HCT116 (cell line): ENCODE measurements at regions of chr4 and their contacts with region 1.

Region 1: DNA sequence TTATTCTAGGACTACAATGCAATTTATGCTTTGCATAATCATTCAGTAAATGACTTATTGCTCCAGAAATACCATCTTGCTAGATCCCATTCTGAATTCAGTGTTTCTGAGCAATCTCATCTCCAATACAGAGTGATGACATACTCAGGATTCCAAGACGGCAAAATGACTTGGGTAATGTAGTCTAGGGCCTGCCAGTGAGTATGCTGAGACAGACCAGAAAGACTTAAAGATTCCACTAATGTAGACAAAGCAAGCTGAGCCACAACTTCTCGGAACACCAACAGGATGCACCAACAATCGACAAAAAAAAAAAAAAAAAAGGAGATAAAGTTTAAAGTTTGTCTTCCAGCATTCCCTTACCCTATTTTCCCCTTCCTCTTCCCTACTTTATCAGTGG is 919 bp upstream of the SEC24B start:
- DNase-seq: no peak
- ATAC-seq: no peak
- H3K4me3 ChIP-seq: peak overlapping the region; percentile 77 to 89
- H3K27ac ChIP-seq: peak overlapping the region; percentile 83
- H3K4me1 ChIP-seq: peaks cover 7 to 22% of the 10 kb centered on the region in 2 experiments; a peak in 3 of 4 replicates
- H3K27me3 ChIP-seq: no peaks in the 10 kb centered on the region
- CTCF ChIP-seq: no peak
- POLR2A ChIP-seq: no peak
- RAD21 ChIP-seq: no peak

Region 2: DNA sequence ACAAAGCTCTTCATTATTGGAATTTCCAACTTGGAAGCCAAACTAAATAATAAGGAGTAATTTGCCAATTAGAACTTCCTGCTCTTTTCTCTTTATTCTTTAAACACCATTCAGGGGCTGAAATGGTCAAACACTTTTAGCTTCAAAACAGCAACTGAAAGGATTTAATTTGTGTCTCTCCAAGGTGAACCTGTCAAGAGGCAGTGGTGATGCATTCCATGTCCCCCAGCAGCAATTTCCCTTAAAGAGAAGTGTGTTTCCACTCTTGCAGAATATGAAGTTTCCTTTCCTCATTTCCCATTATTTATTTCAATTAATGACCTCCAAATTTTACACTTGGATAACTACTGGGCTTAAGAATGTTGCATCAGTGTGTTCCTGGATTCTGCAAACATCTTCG is 286.2 kb before region 1 on chr4:
- CTCF ChIA-PET with region 1: no interaction called
- POLR2A ChIA-PET with region 1: no interaction called
- RAD21 ChIA-PET with region 1: no interaction called
- intact Hi-C with region 1: no loop called
- DNase-seq: no peak
- ATAC-seq: no peak
- H3K4me3 ChIP-seq: no peak overlapping the region
- H3K27ac ChIP-seq: no peak overlapping the region
- H3K4me1 ChIP-seq: no peaks in the 10 kb centered on the region
- H3K27me3 ChIP-seq: peaks cover 41% of the 10 kb centered on the region
- CTCF ChIP-seq: no peak
- POLR2A ChIP-seq: no peak
- RAD21 ChIP-seq: no peak

Region 3: GRCh38 chr4:109803924-109804571 is 371.4 kb after region 1 on chr4:
- CTCF ChIA-PET with region 1: interaction called, 17 read pairs
- POLR2A ChIA-PET with region 1: no interaction called
- RAD21 ChIA-PET with region 1: no interaction called
- intact Hi-C with region 1: loop called (anchors 1 kb)
- DNase-seq: peak; percentile 51
- ATAC-seq: peak; percentile 94
- H3K4me3 ChIP-seq: no peak overlapping the region
- H3K27ac ChIP-seq: no peak overlapping the region
- H3K4me1 ChIP-seq: peaks cover 0 to 5% of the 10 kb centered on the region in 2 experiments; a peak in 1 of 4 replicates
- H3K27me3 ChIP-seq: no peaks in the 10 kb centered on the region
- CTCF ChIP-seq: peak; percentile 56 to 71 (median 62); a peak in 5 of 6 replicates
- POLR2A ChIP-seq: no peak
- RAD21 ChIP-seq: peak; percentile 85

Region 4: GRCh38 chr4:109826719-109827118 is 394.0 kb after region 1 on chr4:
- CTCF ChIA-PET with region 1: interaction called, 4 read pairs
- POLR2A ChIA-PET with region 1: no interaction called
- RAD21 ChIA-PET with region 1: no interaction called
- intact Hi-C with region 1: loop called (anchors 1 kb)
- DNase-seq: no peak
- ATAC-seq: peak; percentile 66
- H3K4me3 ChIP-seq: no peak overlapping the region
- H3K27ac ChIP-seq: no peak overlapping the region
- H3K4me1 ChIP-seq: no peaks in the 10 kb centered on the region
- H3K27me3 ChIP-seq: no peaks in the 10 kb centered on the region
- CTCF ChIP-seq: peak; percentile 41 to 67 (median 45); a peak in 4 of 6 replicates
- POLR2A ChIP-seq: no peak
- RAD21 ChIP-seq: peak; percentile 62

Region 5: DNA sequence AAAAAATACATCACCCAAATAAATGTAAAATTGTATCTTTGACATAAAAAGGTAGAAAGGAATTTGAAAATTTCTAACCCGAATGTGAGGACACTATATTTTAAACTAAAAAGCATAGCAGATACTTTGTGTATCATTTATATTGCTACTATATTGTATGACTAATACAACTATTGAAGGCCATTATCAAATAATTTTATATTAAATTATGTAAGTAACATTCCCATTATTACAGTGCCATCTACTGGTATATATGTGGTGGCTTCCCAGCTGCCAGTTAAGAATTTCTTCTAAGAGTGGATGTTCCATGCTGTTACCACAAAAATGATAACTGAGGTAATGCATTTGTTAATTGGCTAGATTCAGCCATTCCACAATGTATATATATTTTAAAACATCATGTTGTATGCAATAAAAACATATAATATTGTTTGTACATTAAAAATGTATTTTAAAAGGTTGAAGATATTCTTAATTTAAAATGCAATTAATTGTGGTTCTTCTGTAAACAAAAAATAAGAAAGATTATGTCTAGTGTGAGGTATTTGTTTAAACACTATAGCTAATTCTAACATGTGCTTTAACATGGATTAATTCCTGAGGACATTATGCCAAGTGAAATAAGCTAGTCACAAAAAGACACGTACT is 545.3 kb after region 1 on chr4:
- CTCF ChIA-PET with region 1: interaction called, 6 read pairs
- POLR2A ChIA-PET with region 1: interaction called, 3 read pairs
- RAD21 ChIA-PET with region 1: no interaction called
- intact Hi-C with region 1: loop called (anchors 1 kb)
- DNase-seq: peak; percentile 27
- ATAC-seq: peak; percentile 68
- H3K4me3 ChIP-seq: no peak overlapping the region
- H3K27ac ChIP-seq: no peak overlapping the region
- H3K4me1 ChIP-seq: peaks cover 0 to 4% of the 10 kb centered on the region in 2 experiments; a peak in 1 of 4 replicates
- H3K27me3 ChIP-seq: no peaks in the 10 kb centered on the region
- CTCF ChIP-seq: peak; percentile 57 to 75 (median 58)
- POLR2A ChIP-seq: no peak
- RAD21 ChIP-seq: peak; percentile 80

Region 6: DNA sequence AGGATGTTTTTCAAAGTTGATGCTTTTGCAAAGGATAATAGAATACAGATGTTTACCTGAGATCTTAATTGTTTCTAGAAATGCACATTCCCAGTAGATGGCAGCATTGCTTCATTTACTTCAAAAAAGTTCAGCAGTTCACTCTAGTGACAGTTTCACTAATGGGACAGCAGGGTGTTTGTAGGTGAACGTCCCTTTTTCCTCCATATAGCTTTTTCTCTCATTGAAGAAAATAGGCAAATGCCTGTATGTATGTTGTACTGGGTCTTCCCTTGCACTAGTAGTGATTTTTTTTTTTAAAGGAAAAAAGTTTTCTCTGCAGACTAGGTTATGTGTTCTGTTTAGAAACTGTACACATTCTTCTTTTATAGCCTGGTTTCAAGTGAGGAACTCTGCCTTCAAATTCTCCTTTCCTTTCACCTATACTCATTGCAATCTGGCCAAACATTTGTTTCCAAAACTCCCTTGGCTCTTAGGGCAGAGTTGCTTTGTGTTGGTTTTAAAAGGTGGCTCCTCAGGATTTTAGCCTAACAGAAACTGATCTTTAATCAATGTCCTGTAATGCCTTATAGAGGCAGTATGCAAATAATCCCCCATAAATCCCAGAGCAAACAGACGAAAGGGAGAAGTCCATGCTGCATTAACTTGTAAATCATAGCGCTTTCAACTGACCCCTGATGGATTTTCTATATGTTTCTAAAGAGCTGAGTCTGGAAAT is 566.3 kb after region 1 on chr4:
- CTCF ChIA-PET with region 1: no interaction called
- POLR2A ChIA-PET with region 1: no interaction called
- RAD21 ChIA-PET with region 1: no interaction called
- intact Hi-C with region 1: no loop called
- DNase-seq: peak; percentile 68
- ATAC-seq: peak; percentile 93
- H3K4me3 ChIP-seq: no peak overlapping the region
- H3K27ac ChIP-seq: no peak overlapping the region
- H3K4me1 ChIP-seq: no peaks in the 10 kb centered on the region
- H3K27me3 ChIP-seq: no peaks in the 10 kb centered on the region
- CTCF ChIP-seq: peak; percentile 48 to 93 (median 78)
- POLR2A ChIP-seq: no peak
- RAD21 ChIP-seq: peak; percentile 88